ENCODE measurements at regions of chr14 and their contacts with region 1.

Region 1: DNA sequence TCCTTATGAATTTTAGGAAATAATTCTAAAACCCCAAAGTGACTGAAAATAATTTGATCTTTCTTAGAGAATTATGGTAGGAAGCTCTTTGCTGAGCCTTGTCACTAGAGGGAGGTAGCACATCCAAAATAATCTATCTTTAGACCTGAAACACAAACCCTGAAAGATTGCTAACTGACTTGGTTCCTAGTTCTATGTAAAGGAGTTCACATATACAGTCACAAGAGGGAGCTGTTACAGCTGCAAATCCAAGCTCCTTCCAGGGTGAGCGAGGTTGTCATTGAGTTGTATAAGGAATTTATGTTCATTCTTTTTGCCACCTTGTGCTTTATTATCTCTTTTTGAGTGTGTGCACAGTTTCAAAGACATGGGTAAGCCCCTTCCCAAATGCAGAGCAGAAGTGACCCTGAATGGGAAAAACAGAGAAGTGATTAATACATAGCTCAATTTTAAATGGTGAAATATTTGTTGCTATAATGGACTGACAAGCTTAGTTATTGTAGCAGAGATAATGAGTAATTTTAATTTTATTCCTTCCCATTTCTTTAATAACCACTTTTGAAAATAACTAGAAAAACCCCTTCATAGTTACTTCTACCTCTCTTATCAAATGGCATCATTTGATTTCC is 387.9 kb downstream of the DAD1 start:
- DNase-seq: no peak
- H3K4me3 ChIP-seq: no peak overlapping the region
- CTCF ChIP-seq: peak; percentile 73

Region 2: GRCh38 chr14:22163051-22163450 is 38.0 kb before region 1 on chr14:
- CTCF ChIA-PET with region 1: interaction called, 18 read pairs
- POLR2A ChIA-PET with region 1: no interaction called
- DNase-seq: no peak
- H3K4me3 ChIP-seq: no peak overlapping the region
- CTCF ChIP-seq: no peak

Region 3: GRCh38 chr14:22190411-22191191 is 10.5 kb before region 1 on chr14:
- CTCF ChIA-PET with region 1: interaction called, 71 read pairs
- POLR2A ChIA-PET with region 1: no interaction called
- DNase-seq: peak; percentile 60
- H3K4me3 ChIP-seq: no peak overlapping the region
- CTCF ChIP-seq: no peak

Region 4: GRCh38 chr14:22221508-22221907 is 20.4 kb after region 1 on chr14:
- CTCF ChIA-PET with region 1: interaction called, 69 read pairs
- POLR2A ChIA-PET with region 1: no interaction called
- DNase-seq: no peak
- H3K4me3 ChIP-seq: no peak overlapping the region
- CTCF ChIP-seq: peak; percentile 22

Region 5: GRCh38 chr14:22319526-22320361 is 118.7 kb after region 1 on chr14:
- CTCF ChIA-PET with region 1: interaction called, 17 read pairs
- POLR2A ChIA-PET with region 1: no interaction called
- DNase-seq: no peak
- H3K4me3 ChIP-seq: no peak overlapping the region
- CTCF ChIP-seq: peak; percentile 57

Region 6: DNA sequence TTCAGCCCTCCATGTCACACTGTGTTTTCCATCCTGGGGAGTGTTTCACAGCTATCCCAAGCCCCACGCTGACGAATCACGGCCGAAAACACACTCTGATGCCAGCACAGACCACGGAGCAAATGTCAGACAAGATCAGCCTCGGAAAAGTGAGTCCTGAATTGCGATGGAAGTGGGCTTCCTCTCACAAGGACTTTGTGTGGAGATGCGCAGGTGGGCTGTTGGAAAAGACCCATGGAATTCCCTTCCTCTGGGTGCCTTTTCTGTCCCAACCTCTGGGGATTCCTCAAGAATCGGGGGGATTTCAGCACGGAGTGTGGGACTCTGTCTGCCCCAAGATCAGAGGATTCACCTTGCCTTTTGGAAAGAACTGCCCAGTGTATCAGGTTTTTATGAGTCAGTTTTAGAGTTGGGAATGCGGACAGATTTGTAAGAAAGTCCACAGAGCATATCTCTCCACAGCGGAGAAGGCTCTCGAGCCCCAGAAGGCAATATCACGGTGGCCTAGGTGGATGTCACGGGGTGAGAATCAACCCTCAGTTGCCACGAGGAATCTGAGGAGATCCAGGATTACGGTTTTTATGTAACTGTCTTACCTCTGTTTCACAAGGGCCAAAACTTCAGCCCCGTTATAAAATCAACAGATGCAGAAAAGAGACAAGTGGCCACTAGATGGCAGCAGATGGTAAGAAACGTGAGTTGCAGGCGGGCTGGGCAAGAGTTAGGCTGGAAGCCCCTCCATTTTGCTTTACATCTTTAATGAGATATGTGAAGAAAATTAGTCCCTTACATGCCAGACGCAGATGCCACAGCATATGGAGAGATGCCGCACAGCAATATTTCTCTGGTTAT is 186.1 kb after region 1 on chr14:
- CTCF ChIA-PET with region 1: interaction called, 18 read pairs
- POLR2A ChIA-PET with region 1: no interaction called
- DNase-seq: no peak
- H3K4me3 ChIP-seq: peak overlapping the region; percentile 13
- CTCF ChIP-seq: peak; percentile 68

Measured in AG04449 (cell line).